ENCODE measurements at regions of chr6 and their contacts with region 1.

Region 1: DNA sequence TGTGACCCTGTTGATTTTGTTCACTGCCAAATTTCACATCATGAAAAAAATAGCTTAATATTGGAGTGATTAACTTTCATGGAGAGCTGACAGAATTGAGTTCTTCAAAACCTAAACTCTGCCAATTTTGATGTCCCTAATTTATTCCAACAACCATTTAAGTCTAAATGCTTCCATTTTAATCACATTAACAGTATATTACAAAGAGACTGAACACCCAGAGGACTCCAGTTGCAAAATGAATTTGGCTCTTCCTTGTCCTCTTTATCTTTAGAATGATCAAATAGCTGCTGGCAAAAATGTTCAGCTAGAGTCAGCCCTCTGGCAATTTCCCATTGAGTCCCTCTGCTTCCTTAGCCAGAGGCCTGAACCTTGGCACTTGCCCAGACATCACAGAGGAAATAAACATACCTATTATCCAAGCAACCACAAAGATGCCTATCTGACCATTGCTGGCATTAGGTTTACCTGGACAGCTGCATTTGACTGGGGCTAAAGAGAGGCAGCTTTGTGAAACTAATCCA is 299.0 kb upstream of the STXBP5 start:
- DNase-seq: no peak
- H3K4me3 ChIP-seq: no peak overlapping the region
- H3K4me3 Mint-ChIP-seq: no peak overlapping the region
- H3K27ac Mint-ChIP-seq: no peak overlapping the region
- H3K4me1 ChIP-seq: no peaks in the 10 kb centered on the region
- H3K4me1 Mint-ChIP-seq: no peaks in the 10 kb centered on the region
- H3K27me3 ChIP-seq: no peaks in the 10 kb centered on the region
- H3K27me3 Mint-ChIP-seq: no peaks in the 10 kb centered on the region
- CTCF ChIP-seq: no peak

Region 2: DNA sequence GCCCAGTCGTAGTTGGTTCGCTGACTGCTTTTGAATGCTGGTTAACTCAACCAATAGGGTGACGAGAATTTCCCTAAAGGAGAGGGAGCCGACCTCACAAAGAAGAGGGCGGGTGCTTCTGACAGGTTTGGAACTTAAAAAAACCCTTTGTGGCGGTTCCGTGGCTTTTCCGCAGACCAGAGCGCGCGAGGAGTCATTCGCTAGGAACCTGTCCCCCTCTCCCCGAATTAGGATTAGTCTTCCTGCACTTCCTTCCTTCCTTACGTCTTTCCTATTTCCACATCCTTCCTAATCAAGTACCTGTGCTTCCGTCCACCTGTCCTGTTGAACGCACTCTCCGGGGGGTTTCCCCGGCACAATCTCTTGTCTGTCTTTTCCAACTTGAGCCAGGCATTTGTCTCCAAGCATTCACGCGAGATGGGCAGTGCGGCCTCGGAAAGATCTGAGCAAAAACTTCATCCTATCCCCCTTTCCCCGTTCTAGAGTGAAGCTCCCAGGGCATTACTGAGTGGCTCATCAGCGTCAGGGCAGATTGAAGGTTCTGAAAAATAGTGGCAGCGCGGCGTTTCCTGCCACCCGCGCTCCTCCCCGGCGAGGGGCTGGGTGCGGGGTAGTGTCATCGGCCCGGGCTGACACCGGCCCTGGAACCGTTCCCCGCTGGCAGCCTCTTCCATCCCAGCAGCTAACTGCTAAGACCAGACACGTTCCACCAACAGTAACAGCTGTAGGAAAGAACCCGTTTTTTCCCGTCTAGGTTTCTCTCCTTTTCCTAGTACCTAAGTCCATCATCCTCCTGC is 297.5 kb after region 1 on chr6:
- CTCF ChIA-PET with region 1: no interaction called
- POLR2A ChIA-PET with region 1: no interaction called
- intact Hi-C with region 1: loop called (anchors 2 kb)
- DNase-seq: peak; percentile 87 to 88
- H3K4me3 ChIP-seq: peak overlapping the region; percentile 69
- H3K4me3 Mint-ChIP-seq: peak overlapping the region; percentile 98
- H3K27ac Mint-ChIP-seq: peak overlapping the region; percentile 92
- H3K4me1 ChIP-seq: peaks cover 11% of the 10 kb centered on the region; the same call in 1 of the 2 replicates
- H3K4me1 Mint-ChIP-seq: peaks cover 14% of the 10 kb centered on the region
- H3K27me3 ChIP-seq: no peaks in the 10 kb centered on the region
- H3K27me3 Mint-ChIP-seq: no peaks in the 10 kb centered on the region
- CTCF ChIP-seq: no peak

Region 3: GRCh38 chr6:147222160-147222838 is 317.1 kb after region 1 on chr6:
- CTCF ChIA-PET with region 1: no interaction called
- POLR2A ChIA-PET with region 1: no interaction called
- intact Hi-C with region 1: loop called (anchors 1 kb)
- DNase-seq: peak in 1 of 2 experiments; percentile 29
- H3K4me3 ChIP-seq: no peak overlapping the region
- H3K4me3 Mint-ChIP-seq: no peak overlapping the region
- H3K27ac Mint-ChIP-seq: no peak overlapping the region
- H3K4me1 ChIP-seq: 0 out of 2 replicates have a peak, but pooled peaks cover 5% of the 10 kb centered on the region
- H3K4me1 Mint-ChIP-seq: peaks cover 8% of the 10 kb centered on the region
- H3K27me3 ChIP-seq: no peaks in the 10 kb centered on the region
- H3K27me3 Mint-ChIP-seq: no peaks in the 10 kb centered on the region
- CTCF ChIP-seq: peak; percentile 49 to 52

Region 4: DNA sequence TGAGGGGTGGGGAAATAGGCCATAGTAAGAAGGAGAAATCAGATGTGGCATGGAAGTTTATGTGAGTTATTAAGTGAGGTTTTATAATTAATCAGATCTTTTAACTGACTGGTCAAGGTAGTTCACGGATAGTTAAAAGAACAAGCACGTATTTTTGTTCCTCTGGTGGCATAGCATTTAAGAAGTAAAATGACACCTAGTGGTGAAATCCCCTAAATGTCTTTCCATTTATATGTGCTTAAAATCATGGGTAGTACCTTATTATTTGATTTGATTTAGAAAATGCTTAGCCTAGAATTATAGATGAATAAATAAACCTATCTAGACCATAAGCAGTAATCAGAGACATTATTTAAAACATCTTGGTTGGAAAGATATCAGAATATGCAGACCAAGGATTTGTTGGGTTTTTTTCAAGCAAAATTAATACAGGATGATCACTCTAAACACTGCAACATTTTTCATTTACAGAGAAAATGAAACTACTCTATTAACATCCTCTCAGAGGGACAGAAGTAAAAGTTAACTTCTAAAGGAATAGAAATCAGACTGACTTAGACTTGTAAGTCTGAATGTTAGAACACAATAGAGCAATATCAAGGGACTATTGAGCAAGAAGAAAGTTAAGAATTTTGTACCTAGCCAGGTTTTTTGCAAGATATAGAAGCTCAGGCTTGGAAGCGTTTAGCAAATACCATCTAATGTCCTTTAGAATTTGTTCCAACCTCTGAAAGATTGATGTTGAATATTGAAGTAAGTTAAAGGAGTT is 380.0 kb after region 1 on chr6:
- CTCF ChIA-PET with region 1: no interaction called
- POLR2A ChIA-PET with region 1: no interaction called
- intact Hi-C with region 1: loop called (anchors 1 kb)
- DNase-seq: no peak
- H3K4me3 ChIP-seq: no peak overlapping the region
- H3K4me3 Mint-ChIP-seq: no peak overlapping the region
- H3K27ac Mint-ChIP-seq: no peak overlapping the region
- H3K4me1 ChIP-seq: peaks cover 6% of the 10 kb centered on the region
- H3K4me1 Mint-ChIP-seq: peaks cover 6% of the 10 kb centered on the region
- H3K27me3 ChIP-seq: no peaks in the 10 kb centered on the region
- H3K27me3 Mint-ChIP-seq: no peaks in the 10 kb centered on the region
- CTCF ChIP-seq: peak; percentile 24 to 38

Region 5: DNA sequence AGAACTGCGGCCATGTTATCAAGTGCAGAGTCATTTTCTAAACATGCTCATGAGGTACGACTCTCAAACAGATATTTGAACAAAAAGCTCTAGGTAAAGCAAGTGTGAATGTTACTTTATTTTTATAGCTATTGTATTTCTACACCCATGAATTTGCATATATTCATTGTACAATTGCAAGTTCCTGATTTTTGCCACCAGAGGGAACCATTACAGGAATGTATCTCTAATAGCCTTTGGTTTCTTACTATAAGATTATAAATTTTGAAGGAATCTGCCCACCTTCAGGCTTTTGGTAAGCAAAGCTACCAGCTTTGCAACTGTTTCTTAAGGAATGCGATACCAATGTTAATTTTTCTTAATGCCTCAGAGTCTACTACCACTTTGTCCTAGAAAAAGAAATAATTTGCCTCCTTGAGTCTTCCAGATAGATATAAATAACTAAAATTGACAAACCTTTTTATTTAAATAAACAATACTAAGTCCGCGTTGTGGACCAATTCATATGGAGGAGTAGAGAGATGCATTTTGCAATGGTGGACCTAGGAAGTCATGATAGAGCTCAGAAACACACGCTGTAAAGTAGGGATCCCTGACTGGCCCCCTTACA is 477.8 kb after region 1 on chr6:
- CTCF ChIA-PET with region 1: no interaction called
- POLR2A ChIA-PET with region 1: no interaction called
- intact Hi-C with region 1: loop called (anchors 2 kb)
- DNase-seq: peak in 1 of 2 experiments; percentile 28
- H3K4me3 ChIP-seq: no peak overlapping the region
- H3K4me3 Mint-ChIP-seq: no peak overlapping the region
- H3K27ac Mint-ChIP-seq: no peak overlapping the region
- H3K4me1 ChIP-seq: no peaks in the 10 kb centered on the region
- H3K4me1 Mint-ChIP-seq: no peaks in the 10 kb centered on the region
- H3K27me3 ChIP-seq: no peaks in the 10 kb centered on the region
- H3K27me3 Mint-ChIP-seq: no peaks in the 10 kb centered on the region
- CTCF ChIP-seq: peak; percentile 47 to 63